Activated naive CD4-positive, alpha-beta T cell treated with anti-CD3 and anti-CD28 coated beads for 36 hours (primary cell): ENCODE measurements at regions of chr3 and their contacts with region 1.

Region 1: DNA sequence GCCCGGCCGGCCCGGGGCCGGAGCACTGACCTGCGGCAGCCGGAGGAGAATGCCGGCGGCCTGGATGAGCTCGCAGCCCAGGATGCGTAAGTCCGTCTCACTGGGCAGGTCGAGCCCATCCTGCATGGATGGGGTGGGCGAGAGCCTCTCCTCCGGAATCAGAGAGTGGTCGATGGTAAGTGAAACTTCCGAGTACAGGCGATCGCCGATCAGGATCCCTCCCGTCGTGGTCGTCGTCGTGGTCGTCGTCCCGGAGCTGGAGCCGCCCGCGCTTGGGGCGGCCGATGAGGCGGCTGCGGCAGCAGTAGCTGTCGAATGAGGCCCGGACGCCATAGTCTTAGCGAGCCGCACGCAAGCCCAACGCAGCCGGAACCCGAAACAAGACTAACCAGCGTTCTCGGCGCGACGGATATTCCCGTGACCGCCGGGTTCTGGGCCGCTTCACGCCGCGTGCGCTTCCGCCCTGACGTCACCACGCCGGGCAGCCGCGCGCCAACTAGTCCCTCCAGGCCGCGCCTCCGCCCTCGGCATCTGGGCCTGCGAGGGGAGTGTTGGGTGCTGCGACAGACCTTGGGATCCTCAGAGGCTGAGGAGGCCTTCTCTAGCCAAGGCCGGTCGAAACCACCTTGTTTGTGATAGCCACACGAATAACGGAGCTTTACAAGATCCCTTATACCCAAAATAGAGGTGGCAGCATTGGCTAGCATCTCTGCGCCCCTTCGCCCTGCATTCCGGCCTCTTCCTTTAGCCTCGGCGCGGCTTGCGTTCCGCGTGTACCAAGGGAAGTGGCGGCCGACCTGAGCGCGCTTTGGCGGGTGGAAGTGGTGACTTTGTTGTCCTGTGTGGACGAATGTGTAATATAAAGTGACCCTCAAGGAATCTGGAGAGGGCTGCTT is at the start of gene CCNL1:
- DNase-seq: peak; percentile 94
- H3K4me3 Mint-ChIP-seq: peak within 1 kb of the TSS; percentile 93
- H3K27ac Mint-ChIP-seq: peak within 1 kb of the TSS; percentile 99
- H3K4me1 Mint-ChIP-seq: peaks cover 43% of the 10 kb centered on the region
- H3K27me3 Mint-ChIP-seq: no peaks in the 10 kb centered on the region
- total RNA-seq, gene CCNL1: 206 to 214 TPM

Region 2: DNA sequence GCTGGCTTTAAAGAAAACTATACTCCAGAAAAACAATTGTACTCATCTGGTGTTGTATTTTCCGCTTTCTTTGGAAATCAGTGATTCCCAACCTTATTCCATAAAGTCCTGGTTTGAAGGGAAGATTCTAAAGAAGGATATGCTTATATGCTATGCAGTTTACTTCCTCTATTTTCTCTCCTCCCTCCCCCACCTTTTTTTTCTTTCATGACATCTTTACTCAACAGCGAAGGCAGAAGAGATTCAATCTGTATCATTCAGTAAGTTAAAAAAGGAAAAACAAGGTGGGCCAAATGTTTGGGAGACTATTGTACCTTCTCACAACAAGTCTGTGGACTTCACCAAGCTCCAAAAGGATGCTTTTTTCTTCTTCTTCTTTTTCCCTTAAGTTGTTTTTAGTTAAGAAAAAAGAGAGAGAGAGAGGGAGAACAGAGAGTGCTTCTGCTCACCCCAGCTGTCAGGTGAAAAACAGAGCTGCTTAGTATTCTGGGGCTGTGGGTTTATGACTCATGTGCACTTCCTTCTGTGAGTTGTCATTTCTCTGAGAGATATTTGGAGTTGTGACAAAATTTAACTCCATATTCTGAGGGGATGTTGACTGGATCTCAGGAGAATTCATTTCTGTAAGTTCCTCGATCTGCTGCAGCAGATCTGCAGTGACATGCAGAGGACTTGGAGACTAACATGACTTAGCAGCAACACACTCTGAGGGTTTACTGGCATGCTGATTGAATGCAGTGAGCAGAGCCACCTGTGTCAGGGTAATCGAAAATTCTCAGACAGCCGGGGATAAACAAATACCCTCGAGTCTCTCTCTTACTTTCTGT is 675.8 kb before region 1 on chr3:
- CTCF ChIA-PET with region 1: no interaction called
- intact Hi-C with region 1: loop called (anchors 1 kb)
- DNase-seq: peak; percentile 70
- H3K4me3 Mint-ChIP-seq: peak overlapping the region; percentile 51
- H3K27ac Mint-ChIP-seq: peak overlapping the region; percentile 81
- H3K4me1 Mint-ChIP-seq: peaks cover 42% of the 10 kb centered on the region
- H3K27me3 Mint-ChIP-seq: no peaks in the 10 kb centered on the region

Region 3: DNA sequence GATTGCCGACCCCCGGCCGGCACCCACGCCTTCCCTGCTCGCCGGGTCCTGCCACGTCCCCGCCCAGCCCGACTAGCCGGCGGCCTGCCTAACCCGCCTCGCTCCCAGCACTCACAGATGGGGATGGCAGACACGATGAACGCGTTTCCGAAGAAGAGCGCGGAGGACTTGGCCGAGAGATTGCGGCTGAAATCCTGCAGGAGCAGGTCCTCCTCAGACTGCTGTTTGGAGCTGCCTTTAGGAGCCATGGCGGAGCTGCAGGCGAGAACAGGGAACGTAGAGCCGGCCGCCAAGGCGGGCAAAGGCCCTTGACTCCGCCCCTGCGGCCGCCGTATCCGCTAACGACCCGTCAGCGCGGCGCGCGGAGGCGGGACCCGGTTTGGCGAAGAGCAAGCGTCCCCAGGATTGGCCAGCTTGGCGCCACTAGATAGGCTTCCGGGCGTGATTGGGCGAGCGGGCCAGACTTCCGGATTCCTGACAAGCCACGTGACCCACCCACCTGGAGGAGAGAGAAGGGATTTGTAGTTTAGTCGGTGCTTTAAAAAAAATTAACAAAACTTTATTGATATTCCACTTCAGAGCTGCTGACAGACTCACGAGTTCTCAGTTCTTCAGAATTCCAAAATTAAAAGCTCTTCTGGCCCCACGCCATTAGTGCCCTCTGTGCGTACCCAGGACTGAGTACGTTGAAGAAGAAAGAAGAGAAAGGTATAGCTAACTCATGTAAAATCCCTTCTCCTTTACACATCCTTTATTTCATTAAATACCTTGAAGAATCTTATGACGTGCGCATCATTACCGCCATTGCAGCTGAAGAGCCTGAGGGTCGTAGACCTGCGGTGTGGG is 604.9 kb before region 1 on chr3 and contains the start of gene SSR3:
- CTCF ChIA-PET with region 1: no interaction called
- intact Hi-C with region 1: loop called (anchors 1 kb)
- DNase-seq: peak; percentile 99
- H3K4me3 Mint-ChIP-seq: peak within 1 kb of the TSS; percentile 90
- H3K27ac Mint-ChIP-seq: peak within 1 kb of the TSS; percentile 86
- H3K4me1 Mint-ChIP-seq: peaks cover 40% of the 10 kb centered on the region
- H3K27me3 Mint-ChIP-seq: no peaks in the 10 kb centered on the region
- total RNA-seq, gene SSR3: 128 to 138 TPM

Region 4: GRCh38 chr3:156816800-156817645 is 343.0 kb before region 1 on chr3:
- CTCF ChIA-PET with region 1: no interaction called
- intact Hi-C with region 1: loop called (anchors 1 kb)
- DNase-seq: peak; percentile 90
- H3K4me3 Mint-ChIP-seq: peak overlapping the region; percentile 90
- H3K27ac Mint-ChIP-seq: peak overlapping the region; percentile 88
- H3K4me1 Mint-ChIP-seq: peaks cover 22% of the 10 kb centered on the region
- H3K27me3 Mint-ChIP-seq: no peaks in the 10 kb centered on the region

Region 5: DNA sequence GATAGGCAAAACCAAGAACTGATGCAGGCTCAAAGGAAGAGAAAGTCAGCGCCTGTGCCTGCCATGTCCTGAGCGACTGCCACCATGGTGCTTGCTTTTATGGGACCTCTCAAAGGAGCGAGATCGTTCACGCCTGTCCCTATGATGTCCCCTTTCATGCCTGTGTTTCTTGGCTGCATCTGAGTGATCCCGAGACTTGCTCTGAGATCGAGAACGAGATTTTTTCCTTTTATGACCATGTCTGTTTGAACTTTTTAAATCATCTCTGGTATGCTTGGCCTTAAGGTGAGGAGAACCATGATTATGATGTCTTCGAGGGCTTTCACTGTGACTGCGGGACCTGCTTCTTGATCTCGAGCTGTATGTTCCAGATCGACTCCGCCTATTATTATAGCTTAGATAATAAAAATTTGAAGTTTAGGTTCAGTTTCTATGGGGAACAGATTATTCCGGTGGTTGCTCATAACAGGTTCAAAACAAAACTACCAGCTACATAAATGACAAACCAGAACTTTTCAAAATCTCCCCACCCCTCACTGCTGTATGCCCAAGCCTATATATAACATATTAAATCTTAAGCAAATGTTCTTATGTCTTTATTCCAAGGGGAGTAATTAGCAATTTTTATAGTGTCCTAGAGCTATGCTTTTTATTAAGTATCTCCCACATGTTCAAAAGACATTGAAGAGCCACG is 11.7 kb before region 1 on chr3:
- CTCF ChIA-PET with region 1: no interaction called
- intact Hi-C with region 1: loop called (anchors 1 kb)
- DNase-seq: no peak
- H3K4me3 Mint-ChIP-seq: no peak overlapping the region
- H3K27ac Mint-ChIP-seq: no peak overlapping the region
- H3K4me1 Mint-ChIP-seq: peaks cover 50% of the 10 kb centered on the region
- H3K27me3 Mint-ChIP-seq: no peaks in the 10 kb centered on the region

Region 6: DNA sequence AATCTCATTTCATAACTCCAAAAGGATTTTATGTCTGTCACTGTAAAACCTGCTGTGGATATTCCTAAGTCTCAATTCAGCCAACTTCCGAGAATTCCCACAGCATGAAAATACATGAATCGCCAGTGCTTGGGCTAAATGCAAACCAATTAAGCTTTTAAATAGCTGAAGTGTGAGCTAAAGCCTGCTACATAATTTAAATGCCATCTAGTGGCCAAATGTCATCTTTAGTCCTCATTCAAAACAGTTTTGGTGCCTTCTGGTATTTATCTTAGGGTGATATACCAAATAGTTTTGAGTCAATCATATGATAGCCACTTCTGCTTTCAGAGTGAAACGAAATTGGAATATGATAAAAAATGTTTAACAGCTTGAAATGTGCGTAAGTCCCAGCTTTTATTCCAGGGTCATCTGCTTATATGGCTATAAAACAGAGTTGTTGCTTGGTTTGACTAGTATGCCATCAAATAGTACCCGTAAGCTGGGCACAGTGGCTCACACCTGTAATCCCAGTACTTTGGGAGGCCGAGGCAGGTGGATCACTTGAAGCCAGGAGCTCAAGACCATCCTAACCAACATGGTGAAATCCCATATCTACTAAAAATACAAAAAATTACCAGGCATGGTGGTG is 41.8 kb after region 1 on chr3:
- CTCF ChIA-PET with region 1: no interaction called
- intact Hi-C with region 1: loop called (anchors 1 kb)
- DNase-seq: no peak
- H3K4me3 Mint-ChIP-seq: no peak overlapping the region
- H3K27ac Mint-ChIP-seq: no peak overlapping the region
- H3K4me1 Mint-ChIP-seq: no peaks in the 10 kb centered on the region
- H3K27me3 Mint-ChIP-seq: no peaks in the 10 kb centered on the region

Region 7: DNA sequence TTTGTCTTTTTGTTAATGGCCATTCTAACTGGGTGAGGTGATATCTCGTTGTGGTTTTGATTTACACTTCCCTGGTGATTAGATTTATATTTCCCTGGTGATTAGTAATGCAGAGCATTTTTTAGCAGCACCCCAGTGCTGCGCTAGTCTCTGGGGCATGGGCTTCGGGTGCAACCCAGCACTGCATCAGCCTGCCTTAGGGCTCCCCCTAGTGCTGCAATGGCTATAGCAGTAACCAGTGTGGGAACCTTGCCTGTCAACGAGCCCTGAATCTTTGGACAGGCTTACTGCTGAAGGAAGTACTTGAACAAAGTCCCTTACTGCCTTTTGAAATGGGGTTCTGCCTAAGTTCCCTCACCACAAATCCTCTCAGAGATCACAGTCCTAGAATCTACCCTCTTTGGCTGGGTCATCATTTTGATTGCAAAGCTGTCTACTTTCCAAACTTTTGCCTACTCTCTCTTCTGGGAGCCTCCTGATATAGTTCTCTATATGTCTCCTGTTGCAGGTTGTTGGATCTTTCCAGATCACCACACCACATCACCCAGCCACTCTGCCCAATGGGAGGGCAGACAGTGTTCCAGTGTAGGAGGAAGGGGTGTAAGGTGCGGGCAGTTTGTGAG is 79.2 kb after region 1 on chr3:
- CTCF ChIA-PET with region 1: interaction called, 3 read pairs
- intact Hi-C with region 1: loop called (anchors 1 kb)
- DNase-seq: peak; percentile 88
- H3K4me3 Mint-ChIP-seq: no peak overlapping the region
- H3K27ac Mint-ChIP-seq: no peak overlapping the region
- H3K4me1 Mint-ChIP-seq: peaks cover 2% of the 10 kb centered on the region
- H3K27me3 Mint-ChIP-seq: no peaks in the 10 kb centered on the region